Mammary epithelial cell (primary cell): ENCODE measurements at regions of chr18 and their contacts with region 1.

Region 1: DNA sequence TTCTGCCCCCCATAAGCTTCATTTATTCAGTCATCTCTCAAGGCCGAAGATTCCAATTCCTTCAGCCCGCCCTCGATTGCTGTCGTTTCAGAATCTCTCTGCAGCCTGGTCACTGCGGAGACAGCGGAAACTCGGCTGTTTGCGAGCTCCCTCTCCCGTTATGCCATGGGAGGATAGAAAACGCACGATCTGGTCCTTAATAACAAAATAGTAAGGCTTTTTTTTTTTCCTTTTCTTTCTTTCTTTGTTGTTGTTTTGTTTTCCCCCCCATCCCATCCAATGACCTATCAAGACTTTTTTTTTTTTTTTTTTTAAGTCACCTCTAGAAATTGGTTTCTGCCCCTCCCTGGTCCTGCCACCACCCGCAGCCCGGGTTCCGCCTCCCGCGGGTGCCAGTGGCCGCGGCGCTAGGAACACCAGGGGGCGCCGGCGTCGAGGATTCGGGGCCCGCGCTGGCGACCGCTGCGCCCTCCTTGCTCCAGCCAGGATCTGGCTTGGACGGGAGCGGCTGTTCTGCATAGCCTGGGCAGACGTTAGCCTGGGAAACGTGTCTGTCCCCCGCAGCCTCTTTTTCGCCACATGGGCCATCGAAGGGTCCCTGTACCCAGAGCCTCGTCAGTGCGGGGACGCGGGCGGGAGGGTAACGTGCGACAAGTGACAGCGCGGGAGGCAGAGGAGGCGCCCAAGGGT is 10.1 kb downstream of the CPLX4 start:
- DNase-seq: peak; percentile 54
- H3K4me3 ChIP-seq: peak overlapping the region; percentile 20 to 43 (median 42)
- H3K27ac ChIP-seq: no peak overlapping the region
- H3K4me1 ChIP-seq: peaks cover 5% of the 10 kb centered on the region
- H3K27me3 ChIP-seq: no peaks in the 10 kb centered on the region
- CTCF ChIP-seq: peak; percentile 57 to 83

Region 2: DNA sequence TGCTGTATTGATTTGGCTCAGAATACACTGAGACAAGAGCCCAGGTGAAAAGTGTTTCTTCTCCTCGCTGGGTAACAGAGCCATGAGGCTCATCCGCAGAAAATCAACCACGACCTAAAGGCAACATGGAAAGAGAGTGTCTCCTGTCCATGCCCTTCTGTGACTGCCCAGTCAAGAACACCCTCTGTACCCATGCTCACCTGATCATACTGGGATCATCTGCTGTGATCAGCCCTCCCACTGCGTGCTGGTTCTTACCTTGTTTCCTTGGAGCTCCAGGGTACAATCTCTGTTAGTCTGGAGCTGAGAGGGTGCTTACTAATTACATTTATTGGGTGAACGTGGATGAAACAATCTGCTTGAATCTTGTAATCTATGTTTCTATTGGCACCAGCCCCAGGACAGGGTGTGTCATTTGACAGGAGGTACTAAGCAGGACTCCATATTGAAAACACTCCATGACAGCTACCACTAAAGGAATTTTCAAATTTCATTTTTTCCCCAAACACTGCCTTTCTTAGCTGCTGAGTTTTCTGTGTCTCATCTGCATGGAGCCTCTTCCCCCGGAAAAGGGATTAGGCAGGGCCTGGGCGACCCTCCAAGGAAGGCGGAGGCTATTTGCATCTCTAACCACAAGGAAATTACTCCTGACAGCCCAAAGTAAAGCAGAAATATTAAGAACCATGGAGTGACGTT is 128.1 kb before region 1 on chr18:
- CTCF ChIA-PET with region 1: no interaction called
- dilution Hi-C with region 1: no loop called
- in situ Hi-C with region 1: no loop called
- intact Hi-C with region 1: no loop called
- DNase-seq: peak; percentile 51
- H3K4me3 ChIP-seq: no peak overlapping the region
- H3K27ac ChIP-seq: no peak overlapping the region
- H3K4me1 ChIP-seq: no peaks in the 10 kb centered on the region
- H3K27me3 ChIP-seq: no peaks in the 10 kb centered on the region
- CTCF ChIP-seq: no peak

Region 3: DNA sequence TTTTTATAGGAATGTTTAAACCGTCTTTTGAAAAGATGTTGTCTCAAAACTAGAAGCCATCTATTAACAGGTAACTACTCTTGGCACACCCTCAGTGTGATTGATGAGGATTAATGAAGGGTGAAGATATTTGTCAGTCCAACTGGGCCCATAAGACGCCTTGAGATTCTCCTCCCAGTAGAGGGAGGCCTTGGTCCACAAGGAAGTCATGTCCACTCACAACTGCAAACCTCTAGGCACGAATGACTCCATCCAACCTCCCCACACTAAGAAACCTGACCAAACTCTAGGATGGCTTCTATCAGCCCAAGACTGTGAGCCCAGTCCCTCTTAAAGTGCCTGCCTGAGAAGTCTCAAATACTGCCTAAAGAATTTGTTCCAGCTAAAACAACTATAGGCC is 107.6 kb before region 1 on chr18:
- CTCF ChIA-PET with region 1: interaction called, 12 read pairs
- dilution Hi-C with region 1: no loop called
- in situ Hi-C with region 1: no loop called
- intact Hi-C with region 1: loop called (anchors 1 kb)
- DNase-seq: peak; percentile 15
- H3K4me3 ChIP-seq: no peak overlapping the region
- H3K27ac ChIP-seq: no peak overlapping the region
- H3K4me1 ChIP-seq: no peaks in the 10 kb centered on the region
- H3K27me3 ChIP-seq: peaks cover 4% of the 10 kb centered on the region
- CTCF ChIP-seq: peak; percentile 25 to 44

Region 4: DNA sequence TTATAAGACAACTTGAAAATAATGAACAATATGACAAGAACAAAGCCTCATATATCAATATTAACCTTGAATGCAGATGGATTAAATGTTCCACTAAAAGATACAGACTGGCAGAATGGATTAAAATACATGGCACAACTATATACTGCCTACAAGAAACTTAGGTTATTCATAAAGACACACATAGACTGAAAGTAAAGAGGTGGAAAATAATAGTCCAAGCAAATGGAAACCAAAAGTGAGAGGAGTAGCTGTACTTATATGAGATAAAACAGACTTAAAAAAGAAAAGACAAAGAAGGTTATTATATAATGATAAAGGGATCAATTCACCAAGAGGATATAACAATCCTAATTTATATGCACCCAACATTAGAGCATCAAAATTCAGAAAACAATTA is 32.4 kb after region 1 on chr18:
- CTCF ChIA-PET with region 1: no interaction called
- dilution Hi-C with region 1: no loop called
- in situ Hi-C with region 1: no loop called
- intact Hi-C with region 1: no loop called
- DNase-seq: no peak
- H3K4me3 ChIP-seq: no peak overlapping the region
- H3K27ac ChIP-seq: no peak overlapping the region
- H3K4me1 ChIP-seq: no peaks in the 10 kb centered on the region
- H3K27me3 ChIP-seq: no peaks in the 10 kb centered on the region
- CTCF ChIP-seq: no peak

Region 5: GRCh38 chr18:59357928-59358327 is 49.5 kb after region 1 on chr18:
- CTCF ChIA-PET with region 1: interaction called, 11 read pairs
- dilution Hi-C with region 1: no loop called
- in situ Hi-C with region 1: no loop called
- intact Hi-C with region 1: no loop called
- DNase-seq: peak; percentile 77
- H3K4me3 ChIP-seq: peak overlapping the region; percentile 63 to 95 (median 81)
- H3K27ac ChIP-seq: peak overlapping the region; percentile 87
- H3K4me1 ChIP-seq: peaks cover 11% of the 10 kb centered on the region
- H3K27me3 ChIP-seq: no peaks in the 10 kb centered on the region
- CTCF ChIP-seq: no peak

Region 6: GRCh38 chr18:59395226-59396110 is 87.1 kb after region 1 on chr18:
- CTCF ChIA-PET with region 1: no interaction called
- dilution Hi-C with region 1: no loop called
- in situ Hi-C with region 1: loop called in 1 of 2 experiments (anchors 5 kb)
- intact Hi-C with region 1: no loop called
- DNase-seq: no peak
- H3K4me3 ChIP-seq: no peak overlapping the region
- H3K27ac ChIP-seq: no peak overlapping the region
- H3K4me1 ChIP-seq: no peaks in the 10 kb centered on the region
- H3K27me3 ChIP-seq: peaks cover 5% of the 10 kb centered on the region
- CTCF ChIP-seq: no peak

Region 7: GRCh38 chr18:59446012-59446411 is 137.6 kb after region 1 on chr18:
- CTCF ChIA-PET with region 1: no interaction called
- dilution Hi-C with region 1: no loop called
- in situ Hi-C with region 1: no loop called
- intact Hi-C with region 1: no loop called
- DNase-seq: peak; percentile 42
- H3K4me3 ChIP-seq: no peak overlapping the region
- H3K27ac ChIP-seq: no peak overlapping the region
- H3K4me1 ChIP-seq: no peaks in the 10 kb centered on the region
- H3K27me3 ChIP-seq: no peaks in the 10 kb centered on the region
- CTCF ChIP-seq: peak in 1 of 2 donors; percentile 17

Region 8: DNA sequence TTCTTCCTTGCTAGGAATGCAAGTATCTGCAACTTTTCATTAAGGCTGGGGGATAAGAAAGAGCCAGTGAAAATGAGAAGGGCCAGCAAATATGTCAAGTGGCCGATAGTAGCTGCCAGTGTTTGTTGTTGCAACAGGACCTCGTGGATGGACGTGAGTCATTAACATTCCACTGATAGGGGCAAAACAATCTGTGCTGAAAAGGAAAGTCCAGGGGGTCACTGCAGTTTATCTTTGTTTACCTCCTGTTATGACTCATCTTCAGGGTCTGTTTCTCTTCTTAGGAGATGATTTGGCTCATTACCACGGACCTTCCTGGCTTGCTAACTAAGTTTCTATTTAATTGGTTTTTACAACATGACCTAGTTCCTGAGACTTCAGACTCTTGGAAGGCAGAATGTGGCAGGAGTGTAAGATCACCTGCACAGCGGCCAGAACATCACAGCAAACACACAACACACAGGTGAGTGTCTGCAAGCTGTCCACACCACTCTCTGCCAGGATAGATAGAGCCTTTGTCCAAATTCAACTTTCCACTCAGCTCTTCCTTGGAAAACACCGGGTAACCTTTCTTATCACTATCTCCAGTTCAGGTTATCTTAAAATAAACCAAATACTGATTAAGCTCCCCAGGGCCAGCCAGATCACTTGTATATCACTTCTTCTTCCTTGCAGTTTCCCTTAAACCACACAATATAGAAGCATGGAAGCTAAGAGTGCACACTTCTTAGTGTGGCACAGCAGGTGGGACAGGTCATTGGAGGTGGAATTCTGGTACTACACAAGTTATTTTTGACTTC is 208.2 kb after region 1 on chr18:
- CTCF ChIA-PET with region 1: interaction called, 15 read pairs
- dilution Hi-C with region 1: no loop called
- in situ Hi-C with region 1: no loop called
- intact Hi-C with region 1: no loop called
- DNase-seq: peak; percentile 55
- H3K4me3 ChIP-seq: no peak overlapping the region
- H3K27ac ChIP-seq: no peak overlapping the region
- H3K4me1 ChIP-seq: peaks cover 5% of the 10 kb centered on the region
- H3K27me3 ChIP-seq: no peaks in the 10 kb centered on the region
- CTCF ChIP-seq: no peak

Region 9: GRCh38 chr18:59802031-59802430 is 493.6 kb after region 1 on chr18:
- CTCF ChIA-PET with region 1: no interaction called
- dilution Hi-C with region 1: no loop called
- in situ Hi-C with region 1: no loop called
- intact Hi-C with region 1: no loop called
- DNase-seq: no peak
- H3K4me3 ChIP-seq: no peak overlapping the region
- H3K27ac ChIP-seq: no peak overlapping the region
- H3K4me1 ChIP-seq: no peaks in the 10 kb centered on the region
- H3K27me3 ChIP-seq: no peaks in the 10 kb centered on the region
- CTCF ChIP-seq: no peak